ENCODE measurements at regions of chr2 and their contacts with region 1.

Region 1: DNA sequence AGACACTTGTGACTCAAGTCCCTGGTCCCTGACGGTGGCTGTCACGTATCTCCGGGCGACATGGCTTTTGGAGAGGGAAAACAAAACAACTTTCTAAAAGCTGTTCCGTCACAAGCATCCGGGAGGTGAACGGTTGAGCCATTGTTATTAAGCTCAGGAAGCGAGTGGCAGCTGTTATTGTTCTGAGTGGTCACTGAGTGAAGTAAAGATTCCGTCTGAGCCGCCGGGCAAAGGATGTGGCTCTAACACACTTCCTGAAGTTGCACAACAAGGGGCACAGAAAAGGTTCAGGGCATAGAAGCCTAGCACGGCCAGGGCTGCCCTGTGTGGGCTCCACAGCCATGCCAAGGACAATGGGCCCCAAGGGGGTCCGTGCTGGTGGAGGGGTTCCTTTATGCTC is 24.3 kb downstream of the INPP5D start:
- DNase-seq: peak; percentile 78
- ATAC-seq: peak; percentile 26
- H3K4me3 Mint-ChIP-seq: peak overlapping the region; percentile 54
- H3K27ac Mint-ChIP-seq: peak overlapping the region; percentile 85
- H3K4me1 Mint-ChIP-seq: peaks cover 80% of the 10 kb centered on the region
- H3K27me3 Mint-ChIP-seq: no peaks in the 10 kb centered on the region
- CTCF ChIP-seq: no peak

Region 2: GRCh38 chr2:233100192-233100998 is 15.9 kb after region 1 on chr2:
- CTCF ChIA-PET with region 1: interaction called, 8 read pairs
- POLR2A ChIA-PET with region 1: interaction called, 51 read pairs
- intact Hi-C with region 1: no loop called
- DNase-seq: peak; percentile 94
- ATAC-seq: peak; percentile 87
- H3K4me3 Mint-ChIP-seq: peak overlapping the region; percentile 41
- H3K27ac Mint-ChIP-seq: peak overlapping the region; percentile 84
- H3K4me1 Mint-ChIP-seq: peaks cover 61% of the 10 kb centered on the region
- H3K27me3 Mint-ChIP-seq: no peaks in the 10 kb centered on the region
- CTCF ChIP-seq: no peak

Region 3: DNA sequence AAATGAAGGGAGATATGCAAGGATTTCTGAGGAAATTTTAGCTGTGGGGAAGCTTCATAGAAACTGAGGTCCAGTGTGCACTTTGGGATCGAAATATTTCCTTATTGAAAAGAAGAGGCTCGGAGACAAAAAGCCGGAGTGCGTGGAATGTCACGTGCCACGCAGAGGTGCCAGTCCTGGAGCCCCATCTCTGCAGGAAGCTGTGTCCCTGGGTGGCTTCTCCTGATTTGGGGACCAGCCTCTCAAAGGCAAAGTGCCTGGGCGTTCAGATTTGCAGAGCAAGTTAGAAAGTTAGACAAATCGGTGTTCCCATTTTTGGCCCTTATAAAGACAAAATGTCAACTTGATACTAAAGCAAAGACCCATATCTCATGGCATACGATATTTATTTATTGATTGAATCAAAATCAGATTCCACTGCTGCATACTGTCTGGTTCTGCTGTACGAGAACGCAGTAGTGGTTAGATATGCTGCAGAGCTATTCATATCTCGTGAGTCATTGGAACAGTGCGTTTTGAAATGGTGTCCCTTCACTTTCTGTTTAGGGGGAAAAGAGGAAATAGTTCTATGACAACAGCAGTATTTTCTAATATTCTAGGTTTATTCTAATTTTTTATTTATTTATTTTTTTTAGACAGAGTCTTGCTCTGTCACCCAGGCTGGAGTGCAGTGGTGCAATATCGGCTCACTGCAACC is 157.9 kb after region 1 on chr2:
- CTCF ChIA-PET with region 1: no interaction called
- POLR2A ChIA-PET with region 1: no interaction called
- intact Hi-C with region 1: loop called (anchors 5 kb)
- DNase-seq: no peak
- ATAC-seq: peak; percentile 37
- H3K4me3 Mint-ChIP-seq: no peak overlapping the region
- H3K27ac Mint-ChIP-seq: no peak overlapping the region
- H3K4me1 Mint-ChIP-seq: peaks cover 55% of the 10 kb centered on the region
- H3K27me3 Mint-ChIP-seq: no peaks in the 10 kb centered on the region
- CTCF ChIP-seq: no peak